ENCODE measurements at regions of chr15 and their contacts with region 1.

Region 1: DNA sequence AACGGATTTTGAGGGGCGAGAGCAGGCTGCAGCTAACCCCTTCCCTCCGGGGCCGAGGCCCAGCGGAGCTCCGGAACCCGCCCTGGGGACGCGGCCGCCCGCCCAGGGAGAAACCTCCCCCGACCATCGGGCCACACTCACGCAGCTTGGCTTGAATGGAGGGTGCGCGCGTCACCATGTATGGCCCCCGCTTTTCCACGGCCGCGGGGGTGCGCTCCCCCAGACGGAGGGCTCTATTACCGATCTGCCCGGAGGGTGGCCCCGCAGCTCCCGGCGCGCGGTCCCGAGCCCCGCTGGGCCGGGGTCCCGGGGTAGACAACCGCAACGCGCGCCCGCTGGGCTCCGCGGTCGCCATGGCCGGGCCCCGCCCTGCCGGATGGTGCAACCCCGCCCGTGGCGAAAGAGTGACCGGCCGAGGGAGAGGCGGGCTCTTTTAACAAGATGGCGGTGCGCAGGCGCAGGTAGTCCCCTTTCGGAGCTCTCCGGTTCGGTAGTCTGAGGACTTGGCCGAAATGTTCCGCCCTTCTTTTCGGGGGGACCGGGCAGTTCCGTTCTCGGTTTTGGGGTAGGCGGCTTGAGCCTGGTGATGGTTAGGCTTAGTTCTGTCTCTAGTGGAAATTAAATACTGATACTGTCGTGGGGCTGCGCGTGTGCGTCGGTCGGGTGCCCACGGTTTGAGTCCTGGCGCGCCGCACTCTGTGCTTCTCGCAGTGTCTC is at the start of gene FAM219B:
- DNase-seq: peak; percentile 90 to 98
- ATAC-seq: peak; percentile 88 to 93
- H3K4me3 ChIP-seq: peak within 1 kb of the TSS; percentile 78
- H3K27ac ChIP-seq: peak within 1 kb of the TSS; percentile 92
- H3K4me1 ChIP-seq: peaks cover 13% of the 10 kb centered on the region
- CTCF ChIP-seq: no peak
- EP300 ChIP-seq: no peak
- POLR2A ChIP-seq: peak; percentile 89
- RAD21 ChIP-seq: no peak
- polyA plus RNA-seq, gene FAM219B: 46.2 and 65.3 TPM in 2 replicates

Region 2: DNA sequence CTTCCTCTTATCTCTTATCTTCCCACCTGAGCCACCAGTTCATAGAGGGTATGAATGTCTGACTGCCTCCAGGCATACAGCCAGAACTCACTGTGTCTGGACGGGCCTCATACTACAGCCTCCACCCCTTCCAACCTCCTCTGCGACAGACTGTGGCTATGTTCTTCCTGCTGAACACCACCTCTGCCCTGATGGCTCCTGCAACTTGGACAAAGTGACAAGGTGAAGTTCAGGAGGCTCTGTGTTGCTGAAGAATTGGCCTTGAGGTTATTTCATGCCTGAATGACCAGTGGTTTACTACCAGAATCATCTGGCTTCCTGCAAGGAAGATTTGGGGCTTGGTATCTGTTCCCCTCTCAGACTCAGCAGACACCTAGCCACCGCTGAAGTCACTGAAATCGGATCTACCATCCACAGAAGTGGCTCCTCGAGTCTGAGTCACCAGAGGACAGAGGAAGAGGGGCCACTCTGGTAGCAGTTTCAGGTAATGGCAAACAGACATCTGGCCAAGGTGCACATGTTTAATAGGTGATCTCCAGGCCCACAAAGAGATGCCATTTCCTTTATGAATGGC is 49.4 kb before region 1 on chr15:
- CTCF ChIA-PET with region 1: interaction called, 10 read pairs
- POLR2A ChIA-PET with region 1: no interaction called
- DNase-seq: no peak
- ATAC-seq: peak in 1 of 2 experiments; percentile 44; a peak in 2 of 6 replicates
- H3K4me3 ChIP-seq: no peak overlapping the region
- H3K27ac ChIP-seq: no peak overlapping the region
- H3K4me1 ChIP-seq: peaks cover 5% of the 10 kb centered on the region; the same call in 1 of the 3 replicates
- CTCF ChIP-seq: no peak
- EP300 ChIP-seq: no peak
- POLR2A ChIP-seq: no peak
- RAD21 ChIP-seq: no peak

Region 3: DNA sequence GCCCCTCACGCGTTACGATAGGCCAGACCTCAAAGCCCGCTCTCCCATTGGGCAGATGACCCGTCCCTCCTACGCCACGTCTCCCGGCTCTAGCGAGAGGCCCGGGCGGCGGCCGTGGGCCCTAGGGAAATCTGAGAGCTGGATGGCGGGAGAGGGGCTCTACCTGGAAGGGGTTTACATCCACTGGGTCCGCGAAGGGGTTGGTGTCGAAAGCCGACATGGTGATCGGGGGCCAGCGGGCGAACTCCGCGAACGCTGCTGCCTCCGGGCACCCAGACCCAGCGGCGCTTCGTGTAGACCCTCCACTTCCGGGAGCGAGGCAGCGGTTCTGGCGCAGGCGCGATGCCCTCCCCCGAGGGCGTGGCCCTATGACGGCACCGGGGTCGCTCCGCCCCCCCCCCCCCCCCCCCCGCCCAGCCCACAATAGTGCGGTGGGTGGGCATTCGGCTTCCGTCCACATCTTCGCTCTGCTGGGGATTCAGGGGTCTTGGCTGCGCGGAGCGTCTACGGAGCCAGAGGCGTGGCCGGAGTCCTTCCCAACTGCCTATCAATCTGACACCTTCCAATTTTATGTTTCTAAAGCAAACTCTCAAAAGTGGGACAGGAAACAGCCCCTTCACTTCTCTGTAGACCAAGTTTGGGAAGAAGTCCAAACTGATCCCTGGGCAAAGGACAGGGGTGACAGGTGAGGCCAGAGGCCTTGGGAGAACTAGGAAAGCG is 33.4 kb before region 1 on chr15 and contains the start of gene SCAMP2:
- CTCF ChIA-PET with region 1: interaction called, 21 read pairs
- POLR2A ChIA-PET with region 1: interaction called, 7 read pairs
- DNase-seq: peak; percentile 97 to 99
- ATAC-seq: peak; percentile 99
- H3K4me3 ChIP-seq: peak within 1 kb of the TSS; percentile 88
- H3K27ac ChIP-seq: peak within 1 kb of the TSS; percentile 87 to 91
- H3K4me1 ChIP-seq: peaks cover 20% of the 10 kb centered on the region; the same call in 2 of the 3 replicates
- CTCF ChIP-seq: no peak
- EP300 ChIP-seq: no peak
- POLR2A ChIP-seq: peak; percentile 91
- RAD21 ChIP-seq: no peak
- polyA plus RNA-seq, gene SCAMP2: 128 TPM in 2 replicates

Region 4: GRCh38 chr15:74884428-74885223 is 22.0 kb before region 1 on chr15:
- CTCF ChIA-PET with region 1: interaction called, 92 read pairs
- POLR2A ChIA-PET with region 1: interaction called, 15 read pairs
- DNase-seq: no peak
- ATAC-seq: no peak
- H3K4me3 ChIP-seq: no peak overlapping the region
- H3K27ac ChIP-seq: no peak overlapping the region
- H3K4me1 ChIP-seq: 0 out of 3 replicates have a peak, but pooled peaks cover 9% of the 10 kb centered on the region
- CTCF ChIP-seq: no peak
- EP300 ChIP-seq: no peak
- POLR2A ChIP-seq: no peak
- RAD21 ChIP-seq: no peak

Region 5: GRCh38 chr15:74920456-74920855 is 13.9 kb after region 1 on chr15:
- CTCF ChIA-PET with region 1: interaction called, 38 read pairs
- POLR2A ChIA-PET with region 1: interaction called, 9 read pairs
- DNase-seq: no peak
- ATAC-seq: no peak
- H3K4me3 ChIP-seq: no peak overlapping the region
- H3K27ac ChIP-seq: no peak overlapping the region
- H3K4me1 ChIP-seq: no peaks in the 10 kb centered on the region
- CTCF ChIP-seq: no peak
- EP300 ChIP-seq: no peak
- POLR2A ChIP-seq: no peak
- RAD21 ChIP-seq: no peak

Region 6: GRCh38 chr15:74950078-74951000 is 43.7 kb after region 1 on chr15:
- CTCF ChIA-PET with region 1: interaction called, 48 read pairs
- POLR2A ChIA-PET with region 1: interaction called, 8 read pairs
- DNase-seq: peak; percentile 83 to 90
- ATAC-seq: peak; percentile 71 to 85
- H3K4me3 ChIP-seq: no peak overlapping the region
- H3K27ac ChIP-seq: no peak overlapping the region
- H3K4me1 ChIP-seq: peaks cover 21% of the 10 kb centered on the region; the same call in 2 of the 3 replicates
- CTCF ChIP-seq: peak; percentile 99
- EP300 ChIP-seq: no peak
- POLR2A ChIP-seq: no peak
- RAD21 ChIP-seq: peak; percentile 96 to 99